Panc1 (cell line): ENCODE measurements at regions of chr12 and their contacts with region 1.

Region 1: GRCh38 chr12:10276774-10277173 is 30.9 kb upstream of the KLRD1 start:
- DNase-seq: no peak
- ATAC-seq: no peak
- H3K4me3 ChIP-seq: no peak overlapping the region
- H3K27ac ChIP-seq: no peak overlapping the region
- H3K4me1 ChIP-seq: no peaks in the 10 kb centered on the region
- H3K27me3 ChIP-seq: no peaks in the 10 kb centered on the region
- CTCF ChIP-seq: no peak

Region 2: DNA sequence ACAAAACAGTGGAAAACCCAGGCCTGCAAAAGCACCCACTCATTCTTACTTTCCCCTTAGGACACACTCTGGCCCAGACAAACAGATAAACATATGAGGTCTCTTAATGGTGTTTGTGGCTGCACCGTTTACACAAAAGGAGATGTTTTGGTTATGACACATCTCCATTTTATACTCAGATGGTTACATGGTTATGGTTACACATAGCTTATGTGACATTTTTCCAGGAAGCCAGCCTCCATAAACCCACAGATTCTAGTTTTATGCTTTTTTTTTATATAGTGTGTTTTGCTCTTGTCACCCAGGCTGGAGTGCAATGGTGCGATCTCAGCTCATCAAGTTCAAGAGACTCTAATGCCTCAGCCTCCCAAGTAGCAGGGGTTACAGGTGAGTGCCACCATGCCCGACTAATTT is 27.4 kb after region 1 on chr12:
- CTCF ChIA-PET with region 1: interaction called, 11 read pairs
- POLR2A ChIA-PET with region 1: no interaction called
- in situ Hi-C with region 1: no loop called
- intact Hi-C with region 1: no loop called
- DNase-seq: no peak
- ATAC-seq: no peak
- H3K4me3 ChIP-seq: no peak overlapping the region
- H3K27ac ChIP-seq: no peak overlapping the region
- H3K4me1 ChIP-seq: no peaks in the 10 kb centered on the region
- H3K27me3 ChIP-seq: no peaks in the 10 kb centered on the region
- CTCF ChIP-seq: no peak